Esophagus muscularis mucosa (tissue), 4 donors: ENCODE measurements at regions of chr18 and their contacts with region 1.

Region 1: GRCh38 chr18:57621246-57621604 is 411 bp downstream of the NARS1 start:
- DNase-seq: no peak
- H3K4me3 ChIP-seq: peak overlapping the region; percentile 69 to 96 (median 88)
- H3K27ac ChIP-seq: peak overlapping the region; percentile 90 to 97 (median 94)
- H3K4me1 ChIP-seq: peaks cover 25 to 32% (median 27%) of the 10 kb centered on the region in 4 donors
- H3K27me3 ChIP-seq: no peaks in the 10 kb centered on the region
- CTCF ChIP-seq: no peak
- EP300 ChIP-seq: no peak
- POLR2A ChIP-seq: no peak

Region 2: DNA sequence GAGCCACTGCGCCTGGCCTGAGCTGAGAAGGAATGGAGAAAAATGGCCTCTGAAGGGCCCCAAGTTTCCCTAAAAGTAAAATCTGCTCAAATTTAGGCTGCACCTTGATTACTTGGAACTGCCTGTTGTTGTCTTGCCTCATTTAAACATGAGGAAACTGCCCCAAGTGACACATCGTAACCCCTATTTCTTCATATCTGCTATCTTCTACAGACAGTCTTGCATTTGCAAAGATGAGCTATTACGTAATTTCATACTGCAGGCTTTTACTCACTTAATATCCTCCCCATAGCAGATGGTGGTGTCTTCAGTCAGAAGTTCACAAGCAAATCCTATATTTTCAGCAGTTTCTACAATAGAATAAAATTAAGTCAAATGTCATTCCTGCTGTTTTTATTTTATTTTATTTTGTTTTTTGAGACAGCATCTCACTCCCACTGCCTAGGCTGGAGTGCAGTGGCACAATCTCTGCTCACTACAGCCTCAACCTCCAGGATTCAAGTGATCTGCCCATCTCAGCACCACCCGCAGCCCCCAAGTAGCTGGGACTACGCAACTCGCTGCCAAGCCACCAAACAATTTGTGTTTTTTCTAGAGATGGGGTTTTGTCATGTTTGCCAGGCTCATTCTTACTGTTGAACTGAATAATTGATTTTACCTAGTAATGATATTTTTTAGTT is 45.7 kb after region 1 on chr18:
- intact Hi-C with region 1: no loop called
- DNase-seq: no peak
- H3K4me3 ChIP-seq: no peak overlapping the region
- H3K27ac ChIP-seq: peak overlapping the region; percentile 1 to 37 (median 22)
- H3K4me1 ChIP-seq: peaks cover 12 to 29% (median 28%) of the 10 kb centered on the region in 4 donors
- H3K27me3 ChIP-seq: no peaks in the 10 kb centered on the region
- CTCF ChIP-seq: no peak
- EP300 ChIP-seq: no peak
- POLR2A ChIP-seq: no peak

Region 3: GRCh38 chr18:57698571-57699276 is 77.5 kb after region 1 on chr18:
- intact Hi-C with region 1: no loop called
- DNase-seq: no peak
- H3K4me3 ChIP-seq: no peak overlapping the region
- H3K27ac ChIP-seq: peak overlapping the region; percentile 49 to 70 (median 62)
- H3K4me1 ChIP-seq: peaks cover 0 to 30% (median 18%) of the 10 kb centered on the region in 4 donors
- H3K27me3 ChIP-seq: no peaks in the 10 kb centered on the region
- CTCF ChIP-seq: no peak
- EP300 ChIP-seq: no peak
- POLR2A ChIP-seq: no peak

Region 4: DNA sequence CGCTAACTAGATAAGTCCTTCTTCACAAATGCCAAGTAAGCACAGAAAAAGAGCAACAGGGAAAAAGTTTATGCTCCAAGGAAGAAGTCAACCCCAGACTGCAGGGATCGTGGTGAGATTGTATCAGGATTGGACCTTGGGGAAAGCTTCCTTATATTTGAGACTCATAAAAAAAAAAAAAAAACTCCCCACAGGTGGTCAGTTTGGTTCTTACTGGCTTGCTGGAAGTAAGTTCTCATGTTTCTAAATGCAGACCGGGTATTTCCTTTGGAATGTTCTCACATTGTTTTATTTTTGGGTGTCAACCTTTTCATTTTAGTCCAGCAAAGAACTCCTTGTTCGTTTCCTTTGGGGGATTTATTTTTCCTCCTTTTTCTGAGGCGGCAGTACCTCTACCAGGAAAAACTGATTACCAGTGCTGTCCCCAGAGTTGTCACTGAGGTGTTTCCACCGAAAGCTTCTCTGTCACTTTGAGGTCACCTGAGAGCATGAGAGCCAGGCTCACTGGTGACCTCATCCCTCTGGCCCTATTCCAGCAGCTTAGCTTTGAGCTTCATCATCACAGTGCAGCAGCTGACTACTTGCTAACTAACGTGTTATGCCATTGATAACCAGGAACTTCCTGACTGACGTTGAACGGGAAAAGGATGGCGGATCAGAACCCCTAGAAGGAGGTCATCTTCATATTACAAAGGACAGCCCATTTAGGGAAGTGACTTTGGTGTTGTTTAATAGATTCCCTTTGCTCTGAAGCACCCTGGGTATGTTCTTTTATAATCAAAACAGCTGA is 198.6 kb after region 1 on chr18:
- intact Hi-C with region 1: loop called (anchors 10 kb)
- DNase-seq: no peak
- H3K4me3 ChIP-seq: peak overlapping the region in 2 of 4 donors; percentile 7 to 16
- H3K27ac ChIP-seq: peak overlapping the region; percentile 29 to 69 (median 53)
- H3K4me1 ChIP-seq: peaks cover 9 to 20% (median 17%) of the 10 kb centered on the region in 4 donors
- H3K27me3 ChIP-seq: no peaks in the 10 kb centered on the region
- CTCF ChIP-seq: no peak
- EP300 ChIP-seq: no peak
- POLR2A ChIP-seq: no peak